ENCODE measurements at regions of chr7 and their contacts with region 1.

Region 1: GRCh38 chr7:5294169-5294987 is 11.6 kb downstream of the SLC29A4 start:
- DNase-seq: no peak

Region 2: GRCh38 chr7:5117095-5117970 is 177.0 kb before region 1 on chr7:
- intact Hi-C with region 1: no loop called
- DNase-seq: no peak

Region 3: GRCh38 chr7:5266191-5267028 is 28.0 kb before region 1 on chr7:
- intact Hi-C with region 1: loop called in 1 of 2 experiments (anchors 1 kb)
- DNase-seq: no peak